ENCODE measurements at regions of chr13 and their contacts with region 1.

Region 1: GRCh38 chr13:33103457-33103856 is 87.2 kb downstream of the KL start:
- DNase-seq: no peak
- ATAC-seq: no peak
- H3K4me3 ChIP-seq: no peak overlapping the region
- H3K27ac ChIP-seq: no peak overlapping the region
- H3K4me1 ChIP-seq: peaks cover 0 to 23% (median 15%) of the 10 kb centered on the region in 9 donors
- H3K27me3 ChIP-seq: no peaks in the 10 kb centered on the region
- CTCF ChIP-seq: no peak

Region 2: GRCh38 chr13:32340914-32341313 is 762.5 kb before region 1 on chr13:
- intact Hi-C with region 1: no loop called
- DNase-seq: no peak
- ATAC-seq: no peak
- H3K4me3 ChIP-seq: no peak overlapping the region
- H3K27ac ChIP-seq: no peak overlapping the region
- H3K4me1 ChIP-seq: peaks cover 0 to 6% (median 0%) of the 10 kb centered on the region in 9 donors
- H3K27me3 ChIP-seq: no peaks in the 10 kb centered on the region
- CTCF ChIP-seq: no peak

Region 3: GRCh38 chr13:33058776-33059327 is 44.6 kb before region 1 on chr13:
- intact Hi-C with region 1: loop called in 1 of 10 experiments (anchors 1 kb)
- DNase-seq: no peak
- ATAC-seq: peak in 1 of 8 donors; percentile 43
- H3K4me3 ChIP-seq: no peak overlapping the region
- H3K27ac ChIP-seq: peak overlapping the region in 2 of 10 donors; percentile 67 to 80
- H3K4me1 ChIP-seq: peaks cover 0 to 28% (median 21%) of the 10 kb centered on the region in 9 donors
- H3K27me3 ChIP-seq: no peaks in the 10 kb centered on the region
- CTCF ChIP-seq: no peak

Region 4: GRCh38 chr13:33153421-33154404 is 50.3 kb after region 1 on chr13:
- intact Hi-C with region 1: no loop called
- DNase-seq: peak; percentile 49 to 73
- ATAC-seq: peak; percentile 78 to 92 (median 86)
- H3K4me3 ChIP-seq: no peak overlapping the region
- H3K27ac ChIP-seq: peak overlapping the region; percentile 12 to 73 (median 56)
- H3K4me1 ChIP-seq: peaks cover 0 to 43% (median 35%) of the 10 kb centered on the region in 9 donors
- H3K27me3 ChIP-seq: no peaks in the 10 kb centered on the region
- CTCF ChIP-seq: peak in 1 of 9 donors; percentile 7

Region 5: DNA sequence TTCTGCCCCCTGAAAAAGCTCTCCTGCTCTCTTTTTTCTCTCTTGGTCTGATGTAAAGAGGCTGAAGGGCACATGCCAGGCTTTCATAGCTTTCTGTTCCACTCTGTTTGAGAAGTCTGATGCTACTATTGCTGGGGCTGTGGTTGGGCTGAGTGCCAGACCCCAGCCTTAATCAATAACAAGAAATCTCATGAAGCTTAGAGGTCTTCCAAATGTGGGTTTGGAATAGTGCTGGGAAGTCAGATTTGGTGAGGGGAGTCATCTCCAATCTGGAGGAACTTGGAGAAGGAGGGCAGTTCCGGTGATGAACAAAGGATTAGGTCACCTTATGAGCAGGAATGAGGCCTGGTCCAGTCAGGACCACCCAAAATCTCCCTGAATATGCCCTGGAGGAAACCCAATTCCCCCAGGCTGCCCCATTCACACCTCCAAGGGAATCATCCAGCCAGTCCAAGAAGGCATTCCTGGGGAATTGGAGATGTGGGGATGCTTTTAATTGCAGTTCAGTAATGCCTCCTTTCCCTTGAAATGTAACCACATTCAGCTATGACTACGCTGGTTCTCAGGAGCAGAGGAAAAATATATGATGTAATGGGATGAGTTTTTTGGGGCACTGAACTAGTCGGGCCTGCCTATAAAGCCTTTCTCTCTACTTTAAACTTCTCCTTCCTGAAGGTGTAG is 80.1 kb after region 1 on chr13:
- intact Hi-C with region 1: no loop called
- DNase-seq: no peak
- ATAC-seq: no peak
- H3K4me3 ChIP-seq: no peak overlapping the region
- H3K27ac ChIP-seq: peak overlapping the region in 3 of 10 donors; percentile 17 to 32 (median 22)
- H3K4me1 ChIP-seq: peaks cover 18 to 99% (median 78%) of the 10 kb centered on the region in 9 donors
- H3K27me3 ChIP-seq: no peaks in the 10 kb centered on the region
- CTCF ChIP-seq: no peak

Measured in heart right ventricle (tissue), 16 donors.